ENCODE measurements at regions of chr2 and their contacts with region 1.

Region 1: DNA sequence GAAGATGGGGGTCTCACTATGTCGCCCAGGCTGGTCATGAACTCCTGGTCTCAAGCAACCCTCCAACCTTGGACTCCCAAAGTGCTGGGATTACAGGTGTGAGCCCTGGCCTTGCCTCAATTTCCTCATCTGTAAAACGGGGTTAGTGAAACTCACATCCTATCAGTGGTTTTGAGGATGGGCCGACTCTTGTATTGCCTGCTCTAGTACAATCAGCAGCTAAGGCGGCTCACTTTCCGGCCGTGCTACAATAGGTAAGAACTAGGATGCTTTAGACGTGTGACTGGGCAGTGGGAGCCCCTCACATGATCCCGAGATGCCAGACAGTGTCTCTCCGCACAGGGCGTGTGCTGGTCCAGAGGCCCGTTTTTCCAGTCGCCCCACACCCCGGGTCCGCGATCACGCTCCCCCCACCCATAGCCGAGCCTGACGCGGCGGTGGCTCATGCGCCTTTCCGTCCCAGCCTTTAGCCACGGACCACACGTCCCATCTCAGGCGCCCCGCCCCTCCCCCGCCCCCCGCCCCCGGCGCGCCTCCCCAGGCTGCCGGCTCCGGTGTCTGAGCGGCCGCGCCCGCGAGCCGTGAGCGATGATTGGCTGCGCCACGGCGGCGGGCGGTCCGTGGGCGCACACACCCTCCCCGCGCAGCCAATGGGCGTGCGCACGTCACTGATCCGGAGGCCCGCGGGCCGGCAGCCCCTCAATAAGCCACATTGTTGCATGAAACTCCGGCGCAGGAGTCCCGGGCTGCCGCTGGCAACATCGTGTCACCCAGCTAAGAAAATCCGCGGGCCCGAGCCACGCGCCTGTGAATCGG is at the start of gene HK2:
- DNase-seq: peak; percentile 85
- H3K4me3 ChIP-seq: peak within 1 kb of the TSS; percentile 67 to 88 (median 80)
- H3K27ac ChIP-seq: peak within 1 kb of the TSS; percentile 49
- H3K4me1 ChIP-seq: peaks cover 13% of the 10 kb centered on the region
- H3K27me3 ChIP-seq: no peaks in the 10 kb centered on the region
- CTCF ChIP-seq: no peak
- POLR2A ChIP-seq: no peak
- total RNA-seq, gene HK2: 11.0 and 13.0 TPM in 2 replicates

Region 2: DNA sequence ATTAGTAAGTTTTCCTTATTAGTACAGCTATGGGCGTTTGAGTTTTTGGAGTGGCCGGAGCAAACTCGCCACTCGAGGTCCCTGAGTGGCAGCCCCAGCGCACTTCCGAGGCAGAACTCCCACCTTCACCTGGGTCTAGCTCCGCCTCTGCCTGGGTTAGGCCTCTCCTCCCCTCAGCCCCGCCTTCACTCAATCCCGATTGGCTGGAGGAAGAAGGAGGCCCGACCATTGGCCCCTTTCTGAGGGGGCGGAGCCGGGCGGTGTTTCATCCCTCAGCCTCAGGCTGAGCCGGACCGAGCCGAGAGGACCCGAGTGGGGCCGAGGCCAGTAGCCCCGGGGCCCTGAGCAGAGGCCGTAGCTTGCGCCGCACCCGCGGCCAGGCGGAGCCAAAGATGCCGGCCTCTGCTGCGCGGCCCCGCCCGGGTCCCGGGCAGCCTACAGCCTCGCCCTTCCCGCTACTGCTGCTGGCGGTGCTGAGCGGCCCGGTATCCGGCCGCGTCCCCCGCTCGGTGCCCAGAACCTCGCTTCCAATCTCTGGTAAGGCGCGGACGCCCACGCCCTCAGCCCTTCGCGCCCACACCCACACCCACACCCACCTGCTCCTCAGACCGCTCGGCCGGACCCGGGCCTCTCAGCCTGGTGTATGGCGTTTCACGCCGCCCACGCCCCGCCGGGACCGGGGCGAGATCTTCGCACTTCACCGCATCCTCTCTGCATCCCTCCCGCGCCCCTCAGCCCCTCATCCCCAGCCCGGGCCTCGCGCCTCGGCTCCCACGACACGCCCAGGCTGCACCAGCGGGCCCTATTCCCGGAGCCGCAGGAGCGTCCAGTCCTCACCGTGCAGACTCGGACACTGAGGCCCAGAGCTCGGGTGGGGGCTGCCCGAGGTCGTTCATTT is 179.4 kb before region 1 on chr2 and contains the start of gene SEMA4F:
- CTCF ChIA-PET with region 1: no interaction called
- POLR2A ChIA-PET with region 1: no interaction called
- dilution Hi-C with region 1: no loop called
- intact Hi-C with region 1: loop called (anchors 5 kb)
- DNase-seq: peak; percentile 93
- H3K4me3 ChIP-seq: peak within 1 kb of the TSS; percentile 55 to 69 (median 57)
- H3K27ac ChIP-seq: no peak within 1 kb of the TSS
- H3K4me1 ChIP-seq: peaks cover 8% of the 10 kb centered on the region
- H3K27me3 ChIP-seq: no peaks in the 10 kb centered on the region
- CTCF ChIP-seq: no peak
- POLR2A ChIP-seq: no peak
- total RNA-seq, gene SEMA4F: 5.9 and 6.0 TPM in 2 replicates

Region 3: DNA sequence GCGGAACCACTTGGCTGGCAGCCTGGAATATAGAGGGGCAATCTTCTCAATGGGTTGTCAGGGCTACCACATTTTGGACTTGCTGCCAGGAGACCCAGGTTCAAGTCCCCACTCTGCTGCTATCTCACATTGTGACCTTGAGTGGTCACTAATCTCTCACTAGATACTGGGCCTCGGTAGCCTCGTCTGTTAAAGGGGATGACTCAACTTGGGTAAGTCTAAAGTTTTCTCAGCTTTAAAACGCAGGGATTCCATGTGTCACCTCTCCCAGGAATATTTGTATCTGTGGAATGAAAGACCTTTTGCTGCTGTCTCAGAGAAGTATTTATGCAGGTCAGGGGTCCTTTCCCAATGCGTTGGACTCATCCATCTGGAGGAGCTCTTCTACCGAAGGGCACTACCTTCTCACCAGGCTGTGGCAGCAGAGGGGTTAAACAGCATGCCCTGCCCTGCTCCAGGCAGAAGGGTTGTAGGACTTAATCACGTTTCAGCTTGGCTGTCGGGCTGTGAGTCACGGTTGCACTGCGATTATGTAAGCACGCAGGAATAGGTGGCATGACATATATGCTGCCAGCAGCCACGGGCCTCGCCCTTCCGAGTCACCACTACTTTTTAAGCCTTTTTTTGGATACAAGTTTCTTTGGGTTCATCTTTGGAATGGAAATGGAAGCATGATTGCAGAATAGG is 93.1 kb before region 1 on chr2:
- CTCF ChIA-PET with region 1: interaction called, 10 read pairs
- POLR2A ChIA-PET with region 1: no interaction called
- dilution Hi-C with region 1: no loop called
- intact Hi-C with region 1: loop called (anchors 2 kb)
- DNase-seq: peak; percentile 77
- H3K4me3 ChIP-seq: no peak overlapping the region
- H3K27ac ChIP-seq: no peak overlapping the region
- H3K4me1 ChIP-seq: peaks cover 18% of the 10 kb centered on the region
- H3K27me3 ChIP-seq: no peaks in the 10 kb centered on the region
- CTCF ChIP-seq: no peak
- POLR2A ChIP-seq: no peak

Region 4: GRCh38 chr2:74845217-74846011 is 11.8 kb after region 1 on chr2:
- CTCF ChIA-PET with region 1: interaction called, 40 read pairs
- POLR2A ChIA-PET with region 1: no interaction called
- dilution Hi-C with region 1: no loop called
- intact Hi-C with region 1: loop called (anchors 1 kb)
- DNase-seq: peak; percentile 94
- H3K4me3 ChIP-seq: no peak overlapping the region
- H3K27ac ChIP-seq: peak overlapping the region; percentile 63
- H3K4me1 ChIP-seq: peaks cover 47% of the 10 kb centered on the region
- H3K27me3 ChIP-seq: no peaks in the 10 kb centered on the region
- CTCF ChIP-seq: no peak
- POLR2A ChIP-seq: peak; percentile 73

Region 5: GRCh38 chr2:74876081-74876886 is 42.7 kb after region 1 on chr2:
- CTCF ChIA-PET with region 1: interaction called, 89 read pairs
- POLR2A ChIA-PET with region 1: no interaction called
- dilution Hi-C with region 1: no loop called
- intact Hi-C with region 1: loop called (anchors 1 kb)
- DNase-seq: peak; percentile 63
- H3K4me3 ChIP-seq: no peak overlapping the region
- H3K27ac ChIP-seq: no peak overlapping the region
- H3K4me1 ChIP-seq: no peaks in the 10 kb centered on the region
- H3K27me3 ChIP-seq: no peaks in the 10 kb centered on the region
- CTCF ChIP-seq: peak; percentile 52 to 62
- POLR2A ChIP-seq: no peak

Measured in endothelial cell of umbilical vein (primary cell).